Gastrocnemius medialis (tissue), 4 donors: ENCODE measurements at regions of chr15 and their contacts with region 1.

Region 1: DNA sequence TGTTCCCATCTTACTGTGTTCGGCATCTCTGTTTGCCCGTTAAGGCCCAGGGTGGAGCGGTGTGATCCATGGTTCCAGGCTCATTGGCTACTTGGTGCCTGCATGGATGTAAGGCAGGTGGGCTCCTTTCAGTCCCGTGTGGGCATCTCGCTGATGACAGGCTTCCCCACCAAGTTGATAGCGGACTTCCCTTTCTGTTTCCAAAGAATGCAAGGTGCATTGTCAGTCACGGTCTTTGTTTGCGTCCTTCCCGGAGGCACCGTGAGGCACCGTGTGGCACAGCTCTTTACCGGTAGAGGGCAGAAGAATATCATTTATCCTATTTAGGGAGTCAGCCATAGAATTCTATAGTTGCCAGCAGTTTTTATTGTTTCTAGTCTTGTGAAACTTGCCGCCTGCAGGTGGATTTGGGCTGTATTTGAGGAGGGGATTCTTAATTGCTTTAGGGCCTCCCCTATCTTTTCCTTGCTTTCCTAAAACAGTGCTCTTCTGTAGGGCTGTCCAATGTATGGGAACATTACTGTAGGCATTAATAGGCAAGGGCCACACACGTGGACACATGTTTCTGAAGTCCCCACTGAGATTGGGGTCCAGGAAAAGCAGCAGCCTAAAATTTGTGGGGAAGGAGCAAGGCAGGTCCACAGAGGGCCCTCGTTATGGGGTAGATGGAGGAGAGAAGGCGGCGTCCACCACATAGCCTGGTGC is 244.1 kb downstream of the SLCO3A1 start:
- DNase-seq: no peak
- ATAC-seq: peak; percentile 68 to 84
- H3K4me3 ChIP-seq: no peak overlapping the region
- H3K27ac ChIP-seq: no peak overlapping the region
- H3K4me1 ChIP-seq: no peaks in the 10 kb centered on the region
- H3K27me3 ChIP-seq: no peaks in the 10 kb centered on the region
- CTCF ChIP-seq: peak; percentile 24 to 65 (median 58)
- POLR2A ChIP-seq: no peak

Region 2: GRCh38 chr15:92011611-92012367 is 85.8 kb before region 1 on chr15:
- in situ Hi-C with region 1: no loop called
- intact Hi-C with region 1: no loop called
- DNase-seq: peak in 1 of 2 donors; percentile 16
- ATAC-seq: no peak
- H3K4me3 ChIP-seq: no peak overlapping the region
- H3K27ac ChIP-seq: no peak overlapping the region
- H3K4me1 ChIP-seq: peaks cover 0 to 12% of the 10 kb centered on the region in 2 donors
- H3K27me3 ChIP-seq: no peaks in the 10 kb centered on the region
- CTCF ChIP-seq: no peak
- POLR2A ChIP-seq: no peak

Region 3: DNA sequence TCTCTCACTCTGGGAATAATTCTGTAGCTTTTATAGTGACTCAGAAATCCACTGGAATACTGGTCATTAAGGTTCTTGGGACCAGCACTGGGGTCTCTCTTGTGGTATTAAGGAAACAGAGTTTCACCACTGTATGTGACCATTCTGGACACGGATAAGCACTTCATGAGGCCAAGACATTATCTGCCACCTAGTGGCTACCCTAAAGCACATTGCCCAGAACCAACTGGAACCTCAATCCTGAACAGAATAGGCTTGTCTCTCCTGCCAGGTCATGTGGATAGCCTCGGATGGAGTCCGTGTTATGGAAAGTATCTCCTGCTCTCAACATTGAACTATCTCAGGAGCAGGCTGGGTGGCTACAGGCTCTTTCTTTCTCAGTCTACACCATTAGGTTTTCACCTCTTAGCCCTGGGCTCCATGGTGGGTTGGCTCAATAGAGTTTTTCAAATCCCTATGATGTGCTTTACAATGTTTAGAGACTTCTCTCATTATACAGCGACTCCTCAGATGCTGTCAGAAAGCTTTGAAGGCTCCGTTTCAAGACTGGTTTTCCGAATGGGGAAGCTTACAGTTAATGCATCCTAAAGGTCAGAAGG is 128.5 kb after region 1 on chr15:
- in situ Hi-C with region 1: no loop called
- intact Hi-C with region 1: loop called (anchors 5 kb)
- DNase-seq: no peak
- ATAC-seq: no peak
- H3K4me3 ChIP-seq: no peak overlapping the region
- H3K27ac ChIP-seq: no peak overlapping the region
- H3K4me1 ChIP-seq: no peaks in the 10 kb centered on the region
- H3K27me3 ChIP-seq: no peaks in the 10 kb centered on the region
- CTCF ChIP-seq: peak in 2 of 5 experiments; percentile 30 to 33
- POLR2A ChIP-seq: no peak

Region 4: GRCh38 chr15:92391640-92392039 is 294.0 kb after region 1 on chr15:
- in situ Hi-C with region 1: loop called in 1 of 4 experiments (anchors 25 kb)
- intact Hi-C with region 1: no loop called
- DNase-seq: no peak
- ATAC-seq: peak; percentile 53 to 70
- H3K4me3 ChIP-seq: no peak overlapping the region
- H3K27ac ChIP-seq: no peak overlapping the region
- H3K4me1 ChIP-seq: peaks cover 0 to 7% of the 10 kb centered on the region in 2 donors
- H3K27me3 ChIP-seq: peaks cover 31 to 43% (median 40%) of the 10 kb centered on the region in 3 donors
- CTCF ChIP-seq: peak; percentile 7 to 44 (median 18)
- POLR2A ChIP-seq: no peak